ENCODE measurements at regions of chr1 and their contacts with region 1.

Region 1: DNA sequence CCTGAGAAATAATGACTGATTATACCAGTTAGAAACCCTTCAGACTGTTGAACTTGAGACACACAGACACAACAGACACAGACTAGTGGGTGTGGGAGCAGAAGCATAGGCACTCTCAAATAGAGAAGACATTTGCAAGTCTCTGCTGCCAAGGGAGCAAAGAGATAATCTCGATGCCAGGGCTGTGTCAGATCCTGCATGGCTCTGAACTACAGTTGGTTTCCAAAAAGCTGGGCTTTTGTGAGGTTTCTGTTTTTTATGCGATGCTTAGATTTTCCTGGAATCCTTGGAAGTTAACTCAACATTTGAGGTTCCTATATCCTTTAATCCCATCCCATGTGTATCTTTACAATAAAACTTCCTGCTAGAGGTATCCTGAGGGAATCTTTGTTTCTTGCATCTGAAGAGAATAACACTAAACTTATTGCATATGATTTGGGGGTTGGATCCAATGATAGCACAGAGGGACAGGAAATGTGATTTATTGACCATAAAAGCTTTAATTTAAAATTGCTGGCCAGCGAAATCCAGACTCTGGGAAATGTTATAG is 236.4 kb downstream of the SPATA17 start:
- DNase-seq: no peak
- ATAC-seq: no peak
- H3K4me3 ChIP-seq: no peak overlapping the region
- H3K4me3 Mint-ChIP-seq: no peak overlapping the region
- H3K27ac ChIP-seq: no peak overlapping the region
- H3K27ac Mint-ChIP-seq: no peak overlapping the region
- H3K4me1 ChIP-seq: no peaks in the 10 kb centered on the region
- H3K4me1 Mint-ChIP-seq: no peaks in the 10 kb centered on the region
- H3K27me3 ChIP-seq: no peaks in the 10 kb centered on the region
- H3K27me3 Mint-ChIP-seq: no peaks in the 10 kb centered on the region

Region 2: DNA sequence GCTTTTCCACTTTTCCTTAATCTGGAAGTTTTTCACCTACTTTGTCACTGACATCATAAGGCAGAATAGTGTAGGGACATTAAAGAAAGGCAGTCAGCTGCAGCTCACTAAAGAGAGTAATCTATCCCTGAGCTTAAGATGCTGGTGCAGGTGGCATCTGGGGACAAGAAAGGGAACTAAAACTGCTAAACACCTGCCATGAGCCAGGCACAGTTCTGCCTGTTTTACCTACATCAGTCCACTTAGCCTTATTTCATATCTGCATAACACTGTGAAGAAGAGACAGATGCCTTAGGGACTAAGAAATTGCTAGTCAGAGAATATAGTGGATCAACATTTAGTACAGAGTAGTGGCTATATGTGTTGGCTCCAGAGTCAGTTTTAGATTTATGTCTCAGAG is 324.7 kb before region 1 on chr1:
- CTCF ChIA-PET with region 1: no interaction called
- POLR2A ChIA-PET with region 1: no interaction called
- intact Hi-C with region 1: no loop called
- DNase-seq: no peak
- ATAC-seq: no peak
- H3K4me3 ChIP-seq: no peak overlapping the region
- H3K4me3 Mint-ChIP-seq: no peak overlapping the region
- H3K27ac ChIP-seq: no peak overlapping the region
- H3K27ac Mint-ChIP-seq: no peak overlapping the region
- H3K4me1 ChIP-seq: no peaks in the 10 kb centered on the region
- H3K4me1 Mint-ChIP-seq: no peaks in the 10 kb centered on the region
- H3K27me3 ChIP-seq: no peaks in the 10 kb centered on the region
- H3K27me3 Mint-ChIP-seq: no peaks in the 10 kb centered on the region

Region 3: GRCh38 chr1:217837691-217838090 is 29.8 kb before region 1 on chr1:
- CTCF ChIA-PET with region 1: interaction called, 10 read pairs
- POLR2A ChIA-PET with region 1: no interaction called
- intact Hi-C with region 1: no loop called
- DNase-seq: no peak
- ATAC-seq: no peak
- H3K4me3 ChIP-seq: no peak overlapping the region
- H3K4me3 Mint-ChIP-seq: no peak overlapping the region
- H3K27ac ChIP-seq: no peak overlapping the region
- H3K27ac Mint-ChIP-seq: no peak overlapping the region
- H3K4me1 ChIP-seq: no peaks in the 10 kb centered on the region
- H3K4me1 Mint-ChIP-seq: no peaks in the 10 kb centered on the region
- H3K27me3 ChIP-seq: no peaks in the 10 kb centered on the region
- H3K27me3 Mint-ChIP-seq: no peaks in the 10 kb centered on the region

Measured in naive thymus-derived CD4-positive, alpha-beta T cell (primary cell).